BJ (cell line): ENCODE measurements at regions of chr12 and their contacts with region 1.

Region 1: GRCh38 chr12:46430340-46430948 is 57.9 kb upstream of the SLC38A2 start:
- DNase-seq: peak; percentile 48
- H3K4me3 ChIP-seq: no peak overlapping the region
- H3K27me3 ChIP-seq: no peaks in the 10 kb centered on the region
- CTCF ChIP-seq: no peak

Region 2: DNA sequence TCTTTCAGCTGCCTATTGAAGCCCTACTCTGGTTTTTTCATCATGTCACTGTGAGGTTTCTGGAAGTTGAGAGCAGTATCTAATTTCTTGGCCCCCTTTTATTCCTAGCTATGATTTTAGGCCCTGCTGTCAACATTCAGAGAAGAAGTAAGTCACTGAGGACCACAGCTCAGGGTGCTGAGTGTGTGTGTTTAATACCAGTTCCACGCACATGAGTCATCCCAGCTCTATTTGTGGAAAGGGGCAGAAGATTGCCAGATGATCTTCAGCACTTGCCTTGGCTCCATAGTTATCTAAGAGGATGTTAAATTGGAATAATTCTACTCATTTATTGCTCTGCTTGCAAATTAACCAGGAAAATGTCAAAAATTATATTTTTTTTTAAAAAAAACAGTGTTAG is 460.9 kb after region 1 on chr12:
- CTCF ChIA-PET with region 1: no interaction called
- POLR2A ChIA-PET with region 1: interaction called, 11 read pairs
- DNase-seq: no peak
- H3K4me3 ChIP-seq: no peak overlapping the region
- H3K27me3 ChIP-seq: no peaks in the 10 kb centered on the region
- CTCF ChIP-seq: no peak